ENCODE measurements at regions of chr5 and their contacts with region 1.

Region 1: GRCh38 chr5:170745481-170746071 is 37.9 kb upstream of the GABRP start:
- DNase-seq: peak; percentile 84
- ATAC-seq: peak; percentile 78

Region 2: DNA sequence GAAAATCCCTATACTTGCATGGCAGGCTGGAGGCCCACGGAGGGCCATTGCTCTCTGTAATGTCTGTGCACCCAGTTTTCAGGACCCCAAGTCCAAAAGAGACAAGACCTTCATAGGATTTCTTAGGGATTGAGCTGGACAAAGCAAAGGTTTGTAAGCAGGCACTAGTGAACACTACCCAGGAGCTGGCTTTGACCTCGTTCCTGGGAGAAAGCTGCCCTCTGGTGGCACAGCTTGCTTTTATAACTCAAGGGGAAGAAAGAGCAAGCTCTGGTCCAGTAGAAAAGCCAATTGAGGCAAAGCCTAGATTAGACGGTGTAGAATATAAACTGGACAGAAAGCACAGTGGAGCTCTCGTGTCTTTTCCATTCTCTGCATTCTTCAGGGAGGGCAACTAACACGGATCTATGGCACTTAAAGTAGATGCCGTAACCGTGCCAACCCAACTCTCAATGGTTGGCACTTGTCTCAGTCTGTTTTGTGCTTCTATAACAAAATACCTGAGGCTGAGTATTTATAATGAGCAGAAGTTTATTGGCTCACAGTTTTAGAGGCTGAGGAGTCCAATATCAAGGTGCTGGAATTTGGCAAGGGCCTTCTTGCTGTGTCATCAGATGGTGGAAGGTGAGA is 45.9 kb after region 1 on chr5:
- intact Hi-C with region 1: loop called (anchors 2 kb)
- DNase-seq: peak; percentile 73
- ATAC-seq: peak; percentile 90

Measured in left ventricle myocardium superior (tissue), 1 donor.